Colonic mucosa (tissue), 4 donors: ENCODE measurements at regions of chr17 and their contacts with region 1.

Region 1: DNA sequence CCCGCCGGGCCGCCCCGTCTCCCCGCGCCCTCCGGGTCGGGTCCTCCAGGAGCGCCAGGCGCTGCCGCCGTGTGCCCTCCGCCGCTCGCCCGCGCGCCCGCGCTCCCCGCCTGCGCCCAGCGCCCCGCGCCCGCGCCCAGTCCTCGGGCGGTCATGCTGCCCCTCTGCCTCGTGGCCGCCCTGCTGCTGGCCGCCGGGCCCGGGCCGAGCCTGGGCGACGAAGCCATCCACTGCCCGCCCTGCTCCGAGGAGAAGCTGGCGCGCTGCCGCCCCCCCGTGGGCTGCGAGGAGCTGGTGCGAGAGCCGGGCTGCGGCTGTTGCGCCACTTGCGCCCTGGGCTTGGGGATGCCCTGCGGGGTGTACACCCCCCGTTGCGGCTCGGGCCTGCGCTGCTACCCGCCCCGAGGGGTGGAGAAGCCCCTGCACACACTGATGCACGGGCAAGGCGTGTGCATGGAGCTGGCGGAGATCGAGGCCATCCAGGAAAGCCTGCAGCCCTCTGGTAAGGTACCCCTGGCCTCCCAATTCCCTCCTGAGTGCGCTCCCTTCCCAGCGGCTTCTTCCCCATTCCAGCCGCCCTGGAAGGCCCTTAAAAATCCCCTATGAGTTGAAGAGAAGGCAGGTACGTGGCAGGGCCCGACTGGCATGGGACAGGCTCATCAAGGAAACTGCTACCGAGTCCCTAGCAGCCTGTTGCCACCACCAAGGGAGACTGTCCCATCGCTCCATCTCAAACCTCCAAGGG is 505 bp downstream of the IGFBP4 start:
- DNase-seq: peak; percentile 86
- H3K4me3 ChIP-seq: peak overlapping the region; percentile 74
- H3K27ac ChIP-seq: peak overlapping the region; percentile 78
- H3K4me1 ChIP-seq: peaks cover 14% of the 10 kb centered on the region
- H3K27me3 ChIP-seq: no peaks in the 10 kb centered on the region
- CTCF ChIP-seq: peak; percentile 23

Region 2: DNA sequence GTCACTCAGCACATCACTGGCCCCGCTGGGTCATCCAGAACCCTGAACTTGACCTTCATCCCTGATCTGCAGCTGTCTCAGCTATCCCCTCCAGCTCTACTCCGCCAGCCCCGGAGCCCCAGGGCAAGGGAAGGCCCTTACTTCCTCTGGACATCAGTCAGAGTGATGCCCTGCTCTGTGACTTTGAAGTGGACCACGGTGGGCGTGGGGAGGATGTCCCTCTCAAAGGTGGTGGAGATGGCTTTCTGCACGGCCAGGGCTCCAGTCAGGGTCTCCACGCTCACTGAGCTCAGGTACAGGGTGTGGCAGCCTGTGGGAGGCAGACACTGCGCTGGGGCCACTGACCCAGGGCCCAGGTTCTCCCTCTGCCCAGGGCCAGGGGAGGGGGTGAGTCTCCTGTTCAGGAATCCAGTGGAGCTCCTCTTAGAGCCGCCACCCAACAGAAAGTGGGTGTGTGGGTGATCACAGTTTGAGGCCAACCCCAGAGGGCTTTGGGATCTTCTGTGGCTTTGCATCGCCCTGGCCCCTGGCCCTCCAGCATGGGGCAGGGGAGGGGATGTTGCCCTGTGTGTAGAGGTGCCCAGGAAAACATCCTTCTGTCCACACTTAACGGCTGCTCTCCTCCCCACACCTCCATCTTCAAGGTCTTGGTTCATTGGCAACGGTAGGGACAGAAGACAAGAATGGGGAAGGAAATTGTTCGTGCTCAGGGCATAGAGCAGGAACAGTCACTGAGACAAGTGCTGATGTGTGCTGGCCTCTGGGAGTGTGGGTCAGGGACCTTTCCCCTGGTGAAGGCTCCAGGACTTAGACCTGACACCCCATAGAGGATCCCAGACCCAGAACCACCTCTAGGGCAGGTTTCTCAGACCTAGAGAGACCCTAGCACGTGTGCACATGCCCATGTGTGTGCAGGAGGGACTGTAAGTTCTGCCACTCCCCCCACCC is 36.1 kb after region 1 on chr17:
- intact Hi-C with region 1: loop called (anchors 5 kb)
- DNase-seq: no peak
- H3K4me3 ChIP-seq: no peak overlapping the region
- H3K27ac ChIP-seq: no peak overlapping the region
- H3K4me1 ChIP-seq: peaks cover 7% of the 10 kb centered on the region
- H3K27me3 ChIP-seq: no peaks in the 10 kb centered on the region
- CTCF ChIP-seq: no peak

Region 3: GRCh38 chr17:40532520-40533204 is 88.9 kb after region 1 on chr17:
- intact Hi-C with region 1: loop called (anchors 2 kb)
- DNase-seq: no peak
- H3K4me3 ChIP-seq: no peak overlapping the region
- H3K27ac ChIP-seq: peak overlapping the region; percentile 45
- H3K4me1 ChIP-seq: peaks cover 6% of the 10 kb centered on the region
- H3K27me3 ChIP-seq: no peaks in the 10 kb centered on the region
- CTCF ChIP-seq: no peak